WTC11 (cell line): ENCODE measurements at regions of chr2 and their contacts with region 1.

Region 1: DNA sequence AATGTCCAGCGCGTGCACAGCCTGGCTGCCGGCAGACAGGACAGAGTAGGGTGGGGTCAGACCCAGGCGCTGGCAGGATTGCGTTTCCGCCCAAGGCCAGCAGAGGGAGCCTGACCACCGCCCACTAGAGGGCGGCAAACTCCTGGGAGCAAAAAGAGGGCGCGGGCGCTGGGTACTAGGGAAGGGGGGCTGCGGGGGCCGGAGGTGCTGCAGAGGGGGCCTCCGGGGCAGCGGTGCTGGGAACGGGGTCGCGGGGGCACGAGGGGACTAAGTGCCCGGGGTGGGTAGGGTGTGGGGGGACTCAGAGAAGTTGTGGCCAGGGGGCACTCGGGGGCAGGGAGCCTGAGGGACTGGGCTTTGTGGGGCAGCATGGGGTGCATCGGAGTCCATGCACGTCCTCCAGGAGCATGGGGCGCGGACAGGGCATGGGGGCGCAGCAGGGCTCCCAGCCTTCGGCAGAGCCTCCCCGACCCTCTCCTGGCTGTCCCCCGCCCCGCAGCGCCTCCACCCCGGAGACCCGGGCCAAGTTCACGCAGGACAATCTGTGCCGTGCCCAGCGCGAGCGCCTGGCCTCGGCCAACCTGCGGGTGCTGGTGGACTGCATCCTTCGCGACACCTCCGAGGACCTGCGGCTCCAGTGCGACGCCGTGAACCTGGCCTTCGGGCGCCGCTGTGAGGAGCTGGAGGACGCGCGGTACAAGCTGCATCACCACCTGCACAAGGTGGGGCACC is 3.2 kb downstream of the TEKT4 start:
- DNase-seq: peak; percentile 92
- ATAC-seq: peak; percentile 80
- H3K4me3 Mint-ChIP-seq: peak overlapping the region; percentile 49
- H3K27ac Mint-ChIP-seq: no peak overlapping the region
- H3K4me1 Mint-ChIP-seq: peaks cover 10% of the 10 kb centered on the region
- H3K27me3 Mint-ChIP-seq: peaks cover 40% of the 10 kb centered on the region
- CTCF ChIP-seq: peak; percentile 83

Region 2: DNA sequence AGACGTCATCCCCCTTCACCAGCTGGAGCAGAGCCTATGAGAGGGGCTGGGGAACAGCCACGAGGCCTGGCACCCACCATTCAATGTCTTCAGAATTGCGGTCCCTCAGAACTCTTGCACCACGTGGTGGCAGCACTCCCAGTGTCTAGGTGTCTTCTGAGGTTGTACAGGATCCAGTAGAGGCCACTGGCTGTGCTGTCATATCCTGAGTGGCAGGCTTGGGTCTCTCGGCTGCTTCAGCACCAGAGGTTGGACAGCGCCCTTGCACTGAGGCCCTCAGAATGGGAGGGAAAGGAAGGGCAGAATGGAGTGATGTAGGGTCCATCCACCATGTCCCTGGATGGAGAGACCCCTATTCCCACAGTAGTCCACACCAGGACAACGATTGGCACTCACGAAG is 115.2 kb before region 1 on chr2:
- CTCF ChIA-PET with region 1: no interaction called
- POLR2A ChIA-PET with region 1: no interaction called
- DNase-seq: no peak
- ATAC-seq: no peak
- H3K4me3 Mint-ChIP-seq: no peak overlapping the region
- H3K27ac Mint-ChIP-seq: no peak overlapping the region
- H3K4me1 Mint-ChIP-seq: no peaks in the 10 kb centered on the region
- H3K27me3 Mint-ChIP-seq: peaks cover 15% of the 10 kb centered on the region; the same call in 1 of the 2 replicates
- CTCF ChIP-seq: no peak

Region 3: GRCh38 chr2:94861308-94862152 is 12.9 kb before region 1 on chr2:
- CTCF ChIA-PET with region 1: interaction called, 13 read pairs
- POLR2A ChIA-PET with region 1: no interaction called
- DNase-seq: peak; percentile 62
- ATAC-seq: peak; percentile 83
- H3K4me3 Mint-ChIP-seq: peak overlapping the region; percentile 60
- H3K27ac Mint-ChIP-seq: no peak overlapping the region
- H3K4me1 Mint-ChIP-seq: no peaks in the 10 kb centered on the region; the same call in 1 of the 2 replicates
- H3K27me3 Mint-ChIP-seq: peaks cover 77% of the 10 kb centered on the region
- CTCF ChIP-seq: no peak

Region 4: DNA sequence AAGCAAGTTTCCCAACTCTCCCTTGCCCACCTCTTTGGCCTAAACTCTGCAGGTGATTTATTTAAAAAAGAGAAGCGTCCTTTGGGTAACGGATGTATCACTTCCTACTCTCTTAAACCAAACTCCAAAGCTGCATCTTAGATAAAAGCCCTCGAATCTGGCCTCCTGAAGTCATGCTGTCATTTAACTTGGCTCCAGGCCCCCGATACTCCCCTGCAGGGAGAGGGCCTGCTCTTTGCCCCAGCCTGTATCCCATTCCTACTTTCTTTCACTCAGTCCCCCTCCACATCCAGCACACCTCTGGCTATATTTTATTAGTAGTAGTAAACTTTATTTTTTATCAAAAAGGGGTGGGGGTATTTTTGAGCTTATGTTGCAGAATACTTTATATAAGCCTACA is 15.8 kb after region 1 on chr2:
- CTCF ChIA-PET with region 1: interaction called, 17 read pairs
- POLR2A ChIA-PET with region 1: no interaction called
- DNase-seq: no peak
- ATAC-seq: no peak; the same call in 1 of the 2 replicates
- H3K4me3 Mint-ChIP-seq: peak overlapping the region; percentile 29
- H3K27ac Mint-ChIP-seq: peak overlapping the region; percentile 84
- H3K4me1 Mint-ChIP-seq: peaks cover 62% of the 10 kb centered on the region
- H3K27me3 Mint-ChIP-seq: no peaks in the 10 kb centered on the region
- CTCF ChIP-seq: no peak